ENCODE measurements at regions of chr3 and their contacts with region 1.

Region 1: GRCh38 chr3:158434412-158435038 is 136.5 kb upstream of the MLF1 start:
- DNase-seq: peak; percentile 73
- ATAC-seq: peak; percentile 73
- H3K4me3 ChIP-seq: no peak overlapping the region
- H3K27ac ChIP-seq: no peak overlapping the region
- H3K4me1 ChIP-seq: no peaks in the 10 kb centered on the region
- H3K27me3 ChIP-seq: no peaks in the 10 kb centered on the region
- CTCF ChIP-seq: peak; percentile 76

Region 2: DNA sequence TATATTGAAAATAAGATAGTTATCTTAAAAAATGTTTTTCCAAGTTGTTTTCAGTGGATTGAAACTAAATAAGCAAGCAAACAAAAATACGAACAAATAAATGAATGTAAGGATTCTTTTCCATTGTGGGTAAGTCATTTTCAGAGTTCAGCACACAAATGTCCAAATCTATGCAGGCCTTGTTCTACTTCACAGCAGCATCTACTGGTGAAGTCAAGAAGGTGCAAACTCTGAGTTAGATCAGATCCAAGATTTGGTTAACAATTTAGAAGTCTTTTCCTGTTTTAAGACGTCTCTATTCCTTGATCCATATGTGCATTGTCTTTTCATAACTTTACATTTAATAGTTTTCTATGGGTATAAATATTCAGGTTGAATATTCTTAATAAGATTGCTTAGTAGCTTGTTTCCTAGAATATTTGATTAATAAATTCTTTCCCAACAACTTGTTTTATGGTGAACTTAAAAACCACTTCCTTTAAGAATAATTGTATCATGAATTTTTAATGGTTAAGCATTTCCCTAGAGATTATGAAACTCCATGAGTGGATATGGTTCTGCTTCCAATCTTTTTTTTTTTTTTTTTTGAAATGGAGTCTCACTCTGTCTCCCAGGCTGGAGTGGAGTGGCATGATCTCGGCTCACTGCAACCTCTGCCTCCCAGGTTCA is 987.4 kb before region 1 on chr3:
- CTCF ChIA-PET with region 1: no interaction called
- POLR2A ChIA-PET with region 1: no interaction called
- intact Hi-C with region 1: no loop called
- DNase-seq: peak; percentile 69
- ATAC-seq: peak; percentile 78
- H3K4me3 ChIP-seq: no peak overlapping the region
- H3K27ac ChIP-seq: no peak overlapping the region
- H3K4me1 ChIP-seq: peaks cover 16% of the 10 kb centered on the region; the same call in 1 of the 2 replicates
- H3K27me3 ChIP-seq: no peaks in the 10 kb centered on the region
- CTCF ChIP-seq: peak; percentile 86

Region 3: GRCh38 chr3:157767602-157768001 is 666.9 kb before region 1 on chr3:
- CTCF ChIA-PET with region 1: no interaction called
- POLR2A ChIA-PET with region 1: no interaction called
- intact Hi-C with region 1: loop called (anchors 5 kb)
- DNase-seq: peak; percentile 68
- ATAC-seq: peak; percentile 82
- H3K4me3 ChIP-seq: no peak overlapping the region
- H3K27ac ChIP-seq: no peak overlapping the region
- H3K4me1 ChIP-seq: peaks cover 9% of the 10 kb centered on the region
- H3K27me3 ChIP-seq: no peaks in the 10 kb centered on the region
- CTCF ChIP-seq: peak; percentile 61

Region 4: GRCh38 chr3:157865352-157866000 is 569.0 kb before region 1 on chr3:
- CTCF ChIA-PET with region 1: no interaction called
- POLR2A ChIA-PET with region 1: no interaction called
- intact Hi-C with region 1: loop called (anchors 5 kb)
- DNase-seq: peak; percentile 60
- ATAC-seq: peak; percentile 73
- H3K4me3 ChIP-seq: no peak overlapping the region
- H3K27ac ChIP-seq: no peak overlapping the region
- H3K4me1 ChIP-seq: no peaks in the 10 kb centered on the region
- H3K27me3 ChIP-seq: no peaks in the 10 kb centered on the region
- CTCF ChIP-seq: peak; percentile 97

Region 5: GRCh38 chr3:158313338-158313927 is 121.1 kb before region 1 on chr3:
- CTCF ChIA-PET with region 1: no interaction called
- POLR2A ChIA-PET with region 1: no interaction called
- intact Hi-C with region 1: loop called (anchors 5 kb)
- DNase-seq: peak; percentile 56
- ATAC-seq: no peak
- H3K4me3 ChIP-seq: no peak overlapping the region
- H3K27ac ChIP-seq: no peak overlapping the region
- H3K4me1 ChIP-seq: no peaks in the 10 kb centered on the region
- H3K27me3 ChIP-seq: no peaks in the 10 kb centered on the region
- CTCF ChIP-seq: peak; percentile 64

Region 6: DNA sequence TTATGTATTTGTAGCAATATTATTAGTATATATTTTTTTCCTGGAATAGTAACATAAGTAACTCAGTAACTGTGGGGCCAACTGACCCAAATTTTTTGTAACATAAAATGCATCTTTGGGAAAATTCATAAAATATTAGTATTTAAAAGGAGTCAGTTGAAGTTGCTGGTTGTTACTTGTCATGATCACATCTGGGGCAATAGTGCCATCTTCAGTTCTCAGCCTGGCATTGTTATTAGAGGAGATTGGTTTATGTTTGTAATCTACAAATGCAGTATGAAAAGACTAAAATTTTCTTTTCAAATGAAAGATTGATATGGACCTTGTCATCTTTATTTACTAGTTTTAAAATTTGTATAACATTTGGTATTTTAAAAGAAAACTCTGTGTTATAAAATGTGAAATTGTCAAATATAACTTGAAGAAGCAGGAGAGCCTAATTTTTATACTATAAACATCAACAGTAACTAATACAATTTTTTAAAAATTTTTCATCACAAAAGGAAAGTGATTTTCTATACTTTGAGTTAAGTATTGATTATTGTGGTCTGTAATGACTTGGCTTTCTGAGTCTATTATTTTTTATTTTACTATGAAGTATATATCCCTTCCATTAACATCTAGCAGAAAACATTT is 97.7 kb after region 1 on chr3:
- CTCF ChIA-PET with region 1: interaction called, 3 read pairs
- POLR2A ChIA-PET with region 1: no interaction called
- intact Hi-C with region 1: loop called (anchors 2 kb)
- DNase-seq: peak; percentile 53
- ATAC-seq: no peak
- H3K4me3 ChIP-seq: no peak overlapping the region
- H3K27ac ChIP-seq: no peak overlapping the region
- H3K4me1 ChIP-seq: no peaks in the 10 kb centered on the region
- H3K27me3 ChIP-seq: no peaks in the 10 kb centered on the region
- CTCF ChIP-seq: peak; percentile 71

Region 7: DNA sequence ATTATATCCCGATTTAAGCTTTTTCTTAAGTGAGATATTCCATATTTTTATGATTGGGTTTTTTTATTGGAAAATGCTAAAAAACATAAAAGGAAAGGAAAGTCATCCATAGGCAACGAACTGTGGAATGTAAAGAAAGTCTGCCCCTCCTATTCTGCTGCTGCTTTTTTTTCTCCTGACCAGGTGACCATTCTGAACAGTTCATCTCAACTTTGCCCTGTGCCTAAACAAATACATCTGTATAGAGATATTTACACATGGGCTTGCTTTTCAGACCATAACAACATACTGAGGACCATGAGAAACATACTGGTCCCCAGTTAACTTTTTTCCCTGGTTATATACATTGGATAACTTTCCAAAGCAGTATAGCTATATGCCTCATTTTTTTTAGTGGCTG is 117.6 kb after region 1 on chr3:
- CTCF ChIA-PET with region 1: no interaction called
- POLR2A ChIA-PET with region 1: no interaction called
- intact Hi-C with region 1: no loop called
- DNase-seq: no peak
- ATAC-seq: no peak
- H3K4me3 ChIP-seq: no peak overlapping the region
- H3K27ac ChIP-seq: no peak overlapping the region
- H3K4me1 ChIP-seq: no peaks in the 10 kb centered on the region
- H3K27me3 ChIP-seq: no peaks in the 10 kb centered on the region
- CTCF ChIP-seq: no peak

Measured in PC-3 (cell line).